ENCODE measurements at regions of chr15 and their contacts with region 1.

Region 1: GRCh38 chr15:35545824-35546510 is at the start of gene DPH6:
- DNase-seq: peak; percentile 76 to 92 (median 87)
- ATAC-seq: peak; percentile 90
- H3K4me3 ChIP-seq: peak within 1 kb of the TSS; percentile 80
- H3K4me3 Mint-ChIP-seq: peak within 1 kb of the TSS; percentile 90 to 100 (median 98)
- H3K27ac ChIP-seq: peak within 1 kb of the TSS; percentile 93
- H3K27ac Mint-ChIP-seq: peak within 1 kb of the TSS; percentile 93 to 99 (median 98)
- H3K4me1 ChIP-seq: peaks cover 13 to 18% of the 10 kb centered on the region in 2 donors
- H3K4me1 Mint-ChIP-seq: peaks cover 5 to 33% (median 26%) of the 10 kb centered on the region in 7 donors
- H3K27me3 ChIP-seq: no peaks in the 10 kb centered on the region
- H3K27me3 Mint-ChIP-seq: no peaks in the 10 kb centered on the region
- total RNA-seq, gene DPH6: 10.5 to 16.6 (median 12.5) TPM

Region 2: GRCh38 chr15:34038023-34038870 is 1507.7 kb before region 1 on chr15:
- CTCF ChIA-PET with region 1: no interaction called
- POLR2A ChIA-PET with region 1: no interaction called
- intact Hi-C with region 1: loop called in 1 of 2 experiments (anchors 5 kb)
- DNase-seq: peak; percentile 52 to 76 (median 72)
- ATAC-seq: peak; percentile 90
- H3K4me3 ChIP-seq: peak overlapping the region; percentile 100
- H3K4me3 Mint-ChIP-seq: peak overlapping the region; percentile 80 to 97 (median 94)
- H3K27ac ChIP-seq: peak overlapping the region; percentile 80
- H3K27ac Mint-ChIP-seq: peak overlapping the region; percentile 87 to 96 (median 94)
- H3K4me1 ChIP-seq: peaks cover 8 to 14% of the 10 kb centered on the region in 2 donors
- H3K4me1 Mint-ChIP-seq: peaks cover 12 to 25% (median 23%) of the 10 kb centered on the region in 7 donors
- H3K27me3 ChIP-seq: no peaks in the 10 kb centered on the region
- H3K27me3 Mint-ChIP-seq: no peaks in the 10 kb centered on the region

Region 3: GRCh38 chr15:34101366-34102175 is 1444.4 kb before region 1 on chr15 and contains the starts of genes EMC7 and PGBD4:
- CTCF ChIA-PET with region 1: no interaction called
- POLR2A ChIA-PET with region 1: no interaction called
- intact Hi-C with region 1: loop called in 1 of 2 experiments (anchors 5 kb)
- DNase-seq: peak; percentile 98 to 99 (median 99)
- ATAC-seq: peak; percentile 99
- H3K4me3 ChIP-seq: peak within 1 kb of the TSS; percentile 66
- H3K4me3 Mint-ChIP-seq: peak within 1 kb of the TSS; percentile 91 to 100 (median 96)
- H3K27ac ChIP-seq: peak within 1 kb of the TSS; percentile 96
- H3K27ac Mint-ChIP-seq: peak within 1 kb of the TSS; percentile 97 to 100 (median 98)
- H3K4me1 ChIP-seq: peaks cover 16 to 27% of the 10 kb centered on the region in 2 donors
- H3K4me1 Mint-ChIP-seq: peaks cover 15 to 56% (median 45%) of the 10 kb centered on the region in 7 donors
- H3K27me3 ChIP-seq: no peaks in the 10 kb centered on the region
- H3K27me3 Mint-ChIP-seq: peaks cover 0 to 3% (median 0%) of the 10 kb centered on the region in 5 donors
- total RNA-seq, gene EMC7: 30.1 to 65.1 (median 36.9) TPM
- total RNA-seq, gene PGBD4: 3.2 to 6.5 (median 4.2) TPM

Region 4: GRCh38 chr15:34987985-34988873 is 557.7 kb before region 1 on chr15 and contains the start of gene ZNF770:
- CTCF ChIA-PET with region 1: interaction called, 3 read pairs
- POLR2A ChIA-PET with region 1: no interaction called
- intact Hi-C with region 1: loop called in 1 of 2 experiments (anchors 1 kb)
- DNase-seq: peak; percentile 67 to 91 (median 85)
- ATAC-seq: peak; percentile 95
- H3K4me3 ChIP-seq: peak within 1 kb of the TSS; percentile 99
- H3K4me3 Mint-ChIP-seq: peak within 1 kb of the TSS; percentile 93 to 100 (median 98)
- H3K27ac ChIP-seq: peak within 1 kb of the TSS; percentile 97
- H3K27ac Mint-ChIP-seq: peak within 1 kb of the TSS; percentile 96 to 100 (median 99)
- H3K4me1 ChIP-seq: peaks cover 22 to 25% of the 10 kb centered on the region in 2 donors
- H3K4me1 Mint-ChIP-seq: peaks cover 20 to 55% (median 45%) of the 10 kb centered on the region in 7 donors
- H3K27me3 ChIP-seq: no peaks in the 10 kb centered on the region
- H3K27me3 Mint-ChIP-seq: no peaks in the 10 kb centered on the region
- total RNA-seq, gene ZNF770: 32.5 to 69.9 (median 50.2) TPM

Region 5: DNA sequence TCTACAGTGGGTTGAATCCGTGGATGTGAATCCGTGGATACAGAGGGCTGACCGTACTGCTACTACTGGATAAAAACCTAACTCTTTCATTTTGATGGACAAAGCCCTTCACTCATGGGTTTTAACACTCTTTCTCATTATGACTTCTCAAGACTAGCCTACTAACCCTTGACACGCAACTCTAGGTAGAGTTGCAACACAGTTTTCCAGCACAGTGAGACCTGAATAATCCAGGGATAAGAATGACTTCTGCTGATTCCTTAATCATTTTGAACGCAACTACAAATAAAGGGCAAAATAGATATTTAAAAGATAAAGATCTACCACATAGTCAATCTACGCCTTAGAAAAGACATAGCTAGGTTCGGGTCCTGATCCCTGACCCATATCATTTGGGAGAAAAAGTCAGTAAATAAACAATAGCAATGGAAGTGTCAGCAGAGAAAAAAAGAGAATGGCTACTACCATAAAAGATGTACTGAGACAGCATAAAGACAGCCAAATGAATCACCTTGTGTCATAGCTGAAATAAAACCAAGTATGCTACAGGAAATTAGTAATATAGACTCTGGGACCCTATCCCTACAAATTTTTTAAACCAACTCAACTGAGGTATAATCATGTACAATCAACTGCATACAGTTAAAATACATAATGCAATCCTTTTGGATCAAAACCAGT is 87.7 kb before region 1 on chr15:
- CTCF ChIA-PET with region 1: no interaction called
- POLR2A ChIA-PET with region 1: no interaction called
- intact Hi-C with region 1: no loop called
- DNase-seq: no peak
- ATAC-seq: no peak
- H3K4me3 ChIP-seq: no peak overlapping the region
- H3K4me3 Mint-ChIP-seq: no peak overlapping the region
- H3K27ac ChIP-seq: no peak overlapping the region
- H3K27ac Mint-ChIP-seq: peak overlapping the region in 1 of 9 donors; percentile 21
- H3K4me1 ChIP-seq: no peaks in the 10 kb centered on the region
- H3K4me1 Mint-ChIP-seq: peaks cover 0 to 2% (median 0%) of the 10 kb centered on the region in 7 donors
- H3K27me3 ChIP-seq: no peaks in the 10 kb centered on the region
- H3K27me3 Mint-ChIP-seq: no peaks in the 10 kb centered on the region

Region 6: DNA sequence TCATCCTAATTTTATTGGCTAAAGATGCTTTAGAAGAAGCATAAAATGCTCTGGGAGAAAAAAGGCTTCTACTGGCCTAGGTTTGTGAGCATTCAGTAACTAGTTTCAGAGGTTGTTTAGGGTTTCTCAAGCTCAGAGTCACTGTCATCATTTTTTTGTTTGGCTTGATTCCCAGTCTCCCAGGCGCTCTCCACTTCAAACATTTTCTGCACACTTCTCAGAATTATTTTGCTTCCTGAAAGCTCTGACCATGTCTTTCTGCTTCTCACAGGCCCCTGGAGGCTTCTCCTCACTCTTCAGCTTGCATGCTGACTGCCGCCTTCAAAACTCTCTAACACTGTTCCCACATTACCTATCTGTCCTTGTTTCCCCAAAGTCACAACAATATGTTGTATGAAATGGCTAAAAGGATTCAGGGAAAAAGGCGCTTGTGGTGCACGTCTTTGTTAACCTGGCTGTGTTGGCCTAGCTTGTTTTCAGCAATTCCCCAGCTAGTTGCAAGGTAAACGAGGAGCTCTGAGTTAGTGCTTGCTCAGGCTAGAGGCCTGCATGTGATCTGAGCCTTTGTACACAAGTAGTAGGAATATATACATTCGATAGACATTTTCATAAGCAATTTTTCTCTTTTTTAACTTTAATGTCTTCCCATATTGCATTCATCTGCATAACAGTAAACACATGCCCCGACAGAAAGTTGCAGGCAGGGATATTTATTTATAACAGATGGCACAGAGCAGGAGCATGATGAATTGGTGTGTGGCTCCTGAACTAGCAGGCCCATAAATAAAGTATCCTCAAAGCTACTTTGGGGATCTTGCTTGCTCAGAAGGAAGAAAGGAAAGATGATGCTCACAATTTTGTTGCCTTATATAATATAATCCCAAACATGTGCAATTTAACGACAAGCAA is 129.2 kb after region 1 on chr15:
- CTCF ChIA-PET with region 1: no interaction called
- POLR2A ChIA-PET with region 1: no interaction called
- intact Hi-C with region 1: loop called in 1 of 2 experiments (anchors 5 kb)
- DNase-seq: no peak
- ATAC-seq: no peak
- H3K4me3 ChIP-seq: no peak overlapping the region
- H3K4me3 Mint-ChIP-seq: no peak overlapping the region
- H3K27ac ChIP-seq: no peak overlapping the region
- H3K27ac Mint-ChIP-seq: peak overlapping the region in 3 of 9 donors; percentile 27 to 52 (median 38)
- H3K4me1 ChIP-seq: no peaks in the 10 kb centered on the region
- H3K4me1 Mint-ChIP-seq: peaks cover 0 to 13% (median 0%) of the 10 kb centered on the region in 7 donors
- H3K27me3 ChIP-seq: no peaks in the 10 kb centered on the region
- H3K27me3 Mint-ChIP-seq: peaks cover 0 to 6% (median 5%) of the 10 kb centered on the region in 5 donors

Region 7: DNA sequence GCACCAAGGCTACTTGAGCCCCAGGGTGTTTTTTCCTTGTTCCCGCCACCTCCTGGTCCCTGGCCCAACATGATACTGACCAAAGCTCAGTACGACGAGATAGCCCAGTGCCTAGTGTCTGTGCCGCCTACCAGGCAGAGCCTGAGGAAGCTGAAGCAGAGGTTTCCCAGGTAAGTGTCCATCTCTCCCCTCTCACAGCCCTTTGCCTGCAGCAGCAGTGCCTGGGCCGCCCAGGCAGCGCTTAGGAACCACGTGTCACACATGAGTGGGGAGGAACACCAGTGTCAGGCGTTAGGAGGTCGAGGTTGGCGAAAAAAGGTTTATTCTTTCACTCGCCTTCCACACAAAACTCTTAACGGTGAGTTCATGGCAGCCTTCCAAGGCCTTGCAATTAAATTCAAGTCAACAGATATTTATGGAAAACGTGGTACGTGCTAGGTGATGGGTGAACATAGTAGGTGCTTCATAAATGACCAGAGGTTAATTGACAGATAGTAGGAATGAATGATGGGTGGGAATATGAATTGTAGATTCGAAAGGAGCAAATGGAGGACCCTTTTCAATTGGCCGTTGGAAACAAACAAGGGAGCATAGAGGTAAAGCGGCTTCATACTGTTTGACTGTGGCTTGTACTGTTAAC is 1033.9 kb after region 1 on chr15:
- CTCF ChIA-PET with region 1: no interaction called
- POLR2A ChIA-PET with region 1: no interaction called
- intact Hi-C with region 1: loop called (anchors 1 kb)
- DNase-seq: peak in 1 of 9 donors; percentile 27
- ATAC-seq: peak; percentile 23
- H3K4me3 ChIP-seq: peak overlapping the region; percentile 92
- H3K4me3 Mint-ChIP-seq: peak overlapping the region; percentile 85 to 94 (median 92)
- H3K27ac ChIP-seq: peak overlapping the region; percentile 85
- H3K27ac Mint-ChIP-seq: peak overlapping the region; percentile 56 to 96 (median 91)
- H3K4me1 ChIP-seq: peaks cover 6% of the 10 kb centered on the region in 2 donors
- H3K4me1 Mint-ChIP-seq: peaks cover 7 to 34% (median 26%) of the 10 kb centered on the region in 7 donors
- H3K27me3 ChIP-seq: no peaks in the 10 kb centered on the region
- H3K27me3 Mint-ChIP-seq: peaks cover 0 to 4% (median 0%) of the 10 kb centered on the region in 5 donors

Measured in naive thymus-derived CD4-positive, alpha-beta T cell (primary cell).